ENCODE measurements at regions of chr18 and their contacts with region 1.

Region 1: GRCh38 chr18:22563098-22563707 is 145.5 kb upstream of the CTAGE1 start:
- DNase-seq: no peak
- ATAC-seq: peak; percentile 73 to 77
- H3K4me3 ChIP-seq: peak overlapping the region; percentile 68
- H3K27ac ChIP-seq: no peak overlapping the region
- H3K4me1 ChIP-seq: no peaks in the 10 kb centered on the region
- H3K27me3 ChIP-seq: no peaks in the 10 kb centered on the region

Region 2: DNA sequence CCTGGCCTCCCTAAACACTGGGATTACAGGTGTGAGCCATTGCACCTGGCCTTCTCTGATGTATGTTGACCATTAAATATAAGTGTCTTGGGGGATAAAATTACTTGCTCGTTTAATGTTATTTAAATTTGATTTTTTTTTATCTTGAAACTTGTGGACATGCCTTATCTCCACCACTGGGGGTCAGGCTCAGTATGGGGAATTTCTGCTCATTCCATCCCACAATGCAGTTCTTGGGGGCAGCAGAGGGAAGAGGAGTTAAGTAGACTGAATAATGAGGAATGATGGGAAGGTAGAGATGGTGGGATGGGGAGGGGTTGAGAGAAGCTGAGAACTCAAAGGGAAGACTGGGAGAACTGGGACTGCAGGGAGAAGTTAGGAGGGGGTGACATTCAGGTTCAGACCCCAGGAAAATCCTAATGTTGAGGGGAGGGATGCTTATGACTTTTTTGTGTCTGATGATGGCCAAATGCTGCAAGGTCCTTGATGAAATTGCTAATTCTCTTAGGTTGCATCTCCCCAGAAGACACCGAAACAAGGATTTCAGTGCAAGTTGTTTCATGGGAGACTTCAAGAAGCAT is 648.4 kb before region 1 on chr18:
- intact Hi-C with region 1: loop called in 3 of 4 experiments (anchors 10 kb)
- DNase-seq: no peak
- ATAC-seq: peak; percentile 78 to 79
- H3K4me3 ChIP-seq: no peak overlapping the region
- H3K27ac ChIP-seq: no peak overlapping the region
- H3K4me1 ChIP-seq: no peaks in the 10 kb centered on the region
- H3K27me3 ChIP-seq: no peaks in the 10 kb centered on the region

Region 3: GRCh38 chr18:22174341-22175145 is 388.7 kb before region 1 on chr18:
- intact Hi-C with region 1: loop called (anchors 2 to 5 kb)
- DNase-seq: no peak
- ATAC-seq: peak in 1 of 2 donors; percentile 15
- H3K4me3 ChIP-seq: peak overlapping the region; percentile 66
- H3K27ac ChIP-seq: peak overlapping the region; percentile 49
- H3K4me1 ChIP-seq: no peaks in the 10 kb centered on the region
- H3K27me3 ChIP-seq: no peaks in the 10 kb centered on the region

Region 4: DNA sequence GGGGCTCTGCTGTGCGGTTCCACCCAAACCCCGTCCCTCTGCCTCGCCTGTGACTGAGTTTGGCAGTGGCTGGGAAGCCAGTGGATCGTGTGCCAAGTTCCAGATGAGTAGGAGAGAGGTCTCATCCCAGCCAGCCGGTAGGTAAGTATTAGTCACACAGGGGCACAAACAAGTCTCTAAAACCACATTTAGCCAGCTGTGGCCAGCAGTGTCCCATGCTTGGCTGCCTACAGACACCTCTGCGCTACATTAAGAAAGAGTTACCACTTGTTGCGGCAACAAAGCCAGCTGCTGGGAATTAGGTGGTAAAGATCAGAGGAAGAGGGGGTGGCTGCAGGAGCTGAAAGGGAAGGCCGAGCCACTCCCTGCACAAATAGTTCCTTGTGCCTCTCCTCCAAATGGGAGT is 312.6 kb before region 1 on chr18:
- intact Hi-C with region 1: no loop called
- DNase-seq: peak in 1 of 3 donors; percentile 56
- ATAC-seq: no peak
- H3K4me3 ChIP-seq: no peak overlapping the region
- H3K27ac ChIP-seq: no peak overlapping the region
- H3K4me1 ChIP-seq: peaks cover 2% of the 10 kb centered on the region
- H3K27me3 ChIP-seq: no peaks in the 10 kb centered on the region

Region 5: DNA sequence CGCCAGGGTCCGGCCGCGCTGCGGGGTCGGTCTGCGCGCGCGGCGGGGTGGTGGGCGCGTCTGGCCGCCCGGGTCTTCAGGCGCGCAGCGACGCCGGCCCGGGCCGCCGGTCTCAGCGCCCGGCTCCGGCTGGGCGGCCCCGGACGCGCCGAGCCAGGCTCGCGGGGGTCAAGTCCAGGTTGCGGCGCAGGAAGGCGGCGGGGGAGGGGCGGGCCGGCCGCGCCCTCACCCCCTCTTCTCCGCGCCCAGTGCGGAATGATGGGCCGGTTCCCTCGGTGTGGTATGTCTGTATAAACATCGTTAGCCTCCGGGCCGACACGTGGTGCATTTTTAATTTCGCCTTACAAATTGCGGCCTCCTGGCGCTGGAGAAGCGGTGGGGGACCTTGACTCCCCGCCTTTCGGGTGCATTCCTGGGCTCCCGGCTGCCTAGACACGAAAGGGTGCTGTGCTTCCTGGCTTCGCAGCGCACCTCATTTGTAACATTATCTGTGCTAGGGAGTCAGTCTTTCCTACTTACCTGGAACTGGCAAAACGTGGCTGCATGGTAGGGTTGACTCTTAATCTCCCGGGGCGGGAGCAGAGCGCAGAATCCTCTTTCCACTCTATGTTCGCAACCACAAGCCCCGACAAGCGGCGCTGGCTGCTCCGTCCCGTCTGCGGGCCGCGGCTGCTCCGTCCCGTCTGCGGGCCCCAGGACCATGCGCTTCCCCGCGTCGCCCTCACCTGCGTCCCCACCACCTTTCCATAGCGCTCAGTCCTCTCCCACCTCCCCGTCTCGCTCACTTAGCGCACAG is 214.5 kb before region 1 on chr18:
- intact Hi-C with region 1: loop called (anchors 2 to 10 kb)
- DNase-seq: peak; percentile 85 to 95 (median 92)
- ATAC-seq: peak; percentile 81 to 83
- H3K4me3 ChIP-seq: peak overlapping the region; percentile 77
- H3K27ac ChIP-seq: peak overlapping the region; percentile 91
- H3K4me1 ChIP-seq: peaks cover 10% of the 10 kb centered on the region
- H3K27me3 ChIP-seq: no peaks in the 10 kb centered on the region

Region 6: GRCh38 chr18:22471546-22472131 is 91.6 kb before region 1 on chr18:
- intact Hi-C with region 1: loop called in 3 of 4 experiments (anchors 5 to 10 kb)
- DNase-seq: peak; percentile 81 to 88 (median 84)
- ATAC-seq: peak; percentile 87 to 92
- H3K4me3 ChIP-seq: no peak overlapping the region
- H3K27ac ChIP-seq: peak overlapping the region; percentile 89
- H3K4me1 ChIP-seq: peaks cover 20% of the 10 kb centered on the region
- H3K27me3 ChIP-seq: no peaks in the 10 kb centered on the region

Region 7: DNA sequence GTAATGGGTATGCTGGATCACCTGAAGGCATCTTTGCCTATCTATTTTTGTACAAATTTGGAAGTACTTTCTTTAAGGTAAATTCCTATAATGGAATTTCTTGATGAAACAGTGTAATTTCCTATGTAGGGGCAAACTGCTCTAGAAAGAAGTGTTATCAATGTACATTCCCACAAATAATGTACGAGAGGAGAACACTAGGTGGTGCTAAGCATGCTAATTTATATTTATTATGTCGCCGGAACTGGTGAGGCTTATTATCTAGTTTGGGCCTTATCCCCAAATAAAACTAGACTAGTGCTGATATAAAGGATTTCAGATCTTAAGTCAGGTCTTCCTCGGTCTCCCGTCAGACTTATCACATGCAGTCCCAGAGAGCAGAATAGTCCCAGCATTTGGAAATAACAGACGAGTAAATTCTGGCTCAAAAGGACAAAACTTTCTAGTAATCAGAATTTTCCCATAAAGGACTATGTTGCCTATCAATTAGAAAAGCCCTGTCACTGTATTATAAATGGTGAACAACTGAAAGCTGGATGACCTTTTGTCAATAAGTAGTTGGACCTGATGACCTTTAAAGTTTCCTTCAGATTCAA is 283.0 kb after region 1 on chr18:
- intact Hi-C with region 1: no loop called
- DNase-seq: no peak
- ATAC-seq: no peak
- H3K4me3 ChIP-seq: no peak overlapping the region
- H3K27ac ChIP-seq: no peak overlapping the region
- H3K4me1 ChIP-seq: no peaks in the 10 kb centered on the region
- H3K27me3 ChIP-seq: no peaks in the 10 kb centered on the region